Activated B cell treated with CpG ODN at 0.5 μM for 24 hours (primary cell): ENCODE measurements at regions of chr19 and their contacts with region 1.

Region 1: GRCh38 chr19:41872775-41873647 is 4.1 kb upstream of the CD79A start:
- DNase-seq: peak; percentile 63
- ATAC-seq: no peak
- H3K4me3 Mint-ChIP-seq: peak overlapping the region; percentile 47
- H3K27ac Mint-ChIP-seq: peak overlapping the region; percentile 98
- H3K4me1 Mint-ChIP-seq: peaks cover 88% of the 10 kb centered on the region
- H3K27me3 Mint-ChIP-seq: no peaks in the 10 kb centered on the region
- CTCF ChIP-seq: peak; percentile 22

Region 2: GRCh38 chr19:40609561-40610395 is 1263.2 kb before region 1 on chr19:
- CTCF ChIA-PET with region 1: no interaction called
- POLR2A ChIA-PET with region 1: no interaction called
- intact Hi-C with region 1: loop called (anchors 5 kb)
- DNase-seq: peak; percentile 92
- ATAC-seq: peak; percentile 54
- H3K4me3 Mint-ChIP-seq: peak overlapping the region; percentile 88
- H3K27ac Mint-ChIP-seq: peak overlapping the region; percentile 94
- H3K4me1 Mint-ChIP-seq: peaks cover 60% of the 10 kb centered on the region
- H3K27me3 Mint-ChIP-seq: no peaks in the 10 kb centered on the region
- CTCF ChIP-seq: no peak

Region 3: GRCh38 chr19:41883821-41884733 is 11.1 kb after region 1 on chr19:
- CTCF ChIA-PET with region 1: interaction called, 41 read pairs
- POLR2A ChIA-PET with region 1: interaction called, 279 read pairs
- intact Hi-C with region 1: loop called (anchors 1 kb)
- DNase-seq: peak; percentile 86
- ATAC-seq: peak; percentile 82
- H3K4me3 Mint-ChIP-seq: peak overlapping the region; percentile 96
- H3K27ac Mint-ChIP-seq: peak overlapping the region; percentile 97
- H3K4me1 Mint-ChIP-seq: peaks cover 78% of the 10 kb centered on the region
- H3K27me3 Mint-ChIP-seq: no peaks in the 10 kb centered on the region
- CTCF ChIP-seq: no peak

Region 4: GRCh38 chr19:41903193-41903953 is 30.4 kb after region 1 on chr19:
- CTCF ChIA-PET with region 1: interaction called, 3 read pairs
- POLR2A ChIA-PET with region 1: interaction called, 11 read pairs
- intact Hi-C with region 1: no loop called
- DNase-seq: no peak
- ATAC-seq: no peak
- H3K4me3 Mint-ChIP-seq: no peak overlapping the region
- H3K27ac Mint-ChIP-seq: no peak overlapping the region
- H3K4me1 Mint-ChIP-seq: peaks cover 8% of the 10 kb centered on the region
- H3K27me3 Mint-ChIP-seq: no peaks in the 10 kb centered on the region
- CTCF ChIP-seq: no peak

Region 5: DNA sequence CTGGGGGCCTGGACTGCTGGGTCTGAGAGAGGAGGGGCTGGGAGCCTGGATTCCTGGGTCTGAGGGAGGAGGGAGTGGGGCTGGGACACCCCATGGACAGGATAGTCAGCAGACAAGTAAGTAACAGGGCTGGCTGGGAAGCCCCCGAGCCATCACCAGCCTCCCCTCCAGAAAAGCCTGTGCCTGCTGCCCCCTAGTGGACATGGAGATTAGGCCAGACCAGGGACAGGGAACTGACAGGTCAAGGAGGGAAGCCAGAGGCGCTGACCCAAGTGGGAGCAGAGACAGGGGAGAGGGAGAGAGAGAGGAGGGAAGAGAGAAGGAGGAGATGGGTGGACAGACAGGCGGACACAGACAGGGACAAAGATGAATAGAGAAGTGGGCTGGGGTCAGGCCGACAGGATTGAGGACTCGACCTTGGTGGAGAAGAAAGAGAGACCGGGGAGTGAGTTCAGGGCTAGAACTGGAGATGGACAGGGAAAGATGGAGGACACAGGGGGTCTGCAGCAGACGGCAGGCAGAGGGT is 61.9 kb after region 1 on chr19:
- CTCF ChIA-PET with region 1: interaction called, 13 read pairs
- POLR2A ChIA-PET with region 1: interaction called, 189 read pairs
- intact Hi-C with region 1: loop called (anchors 1 kb)
- DNase-seq: peak; percentile 65
- ATAC-seq: peak; percentile 84
- H3K4me3 Mint-ChIP-seq: no peak overlapping the region
- H3K27ac Mint-ChIP-seq: peak overlapping the region; percentile 79
- H3K4me1 Mint-ChIP-seq: peaks cover 63% of the 10 kb centered on the region
- H3K27me3 Mint-ChIP-seq: no peaks in the 10 kb centered on the region
- CTCF ChIP-seq: no peak

Region 6: GRCh38 chr19:41951686-41952172 is 78.7 kb after region 1 on chr19:
- CTCF ChIA-PET with region 1: interaction called, 66 read pairs
- POLR2A ChIA-PET with region 1: interaction called, 189 read pairs
- intact Hi-C with region 1: loop called (anchors 1 kb)
- DNase-seq: peak; percentile 86
- ATAC-seq: peak; percentile 99
- H3K4me3 Mint-ChIP-seq: no peak overlapping the region
- H3K27ac Mint-ChIP-seq: peak overlapping the region; percentile 41
- H3K4me1 Mint-ChIP-seq: peaks cover 29% of the 10 kb centered on the region
- H3K27me3 Mint-ChIP-seq: no peaks in the 10 kb centered on the region
- CTCF ChIP-seq: peak; percentile 92

Region 7: GRCh38 chr19:42032431-42032830 is 159.4 kb after region 1 on chr19:
- CTCF ChIA-PET with region 1: no interaction called
- POLR2A ChIA-PET with region 1: no interaction called
- intact Hi-C with region 1: loop called (anchors 1 kb)
- DNase-seq: no peak
- ATAC-seq: no peak
- H3K4me3 Mint-ChIP-seq: no peak overlapping the region
- H3K27ac Mint-ChIP-seq: no peak overlapping the region
- H3K4me1 Mint-ChIP-seq: peaks cover 4% of the 10 kb centered on the region
- H3K27me3 Mint-ChIP-seq: peaks cover 14% of the 10 kb centered on the region
- CTCF ChIP-seq: no peak